Cardiac septum (tissue), 1 donor: ENCODE measurements at regions of chr14 and their contacts with region 1.

Region 1: DNA sequence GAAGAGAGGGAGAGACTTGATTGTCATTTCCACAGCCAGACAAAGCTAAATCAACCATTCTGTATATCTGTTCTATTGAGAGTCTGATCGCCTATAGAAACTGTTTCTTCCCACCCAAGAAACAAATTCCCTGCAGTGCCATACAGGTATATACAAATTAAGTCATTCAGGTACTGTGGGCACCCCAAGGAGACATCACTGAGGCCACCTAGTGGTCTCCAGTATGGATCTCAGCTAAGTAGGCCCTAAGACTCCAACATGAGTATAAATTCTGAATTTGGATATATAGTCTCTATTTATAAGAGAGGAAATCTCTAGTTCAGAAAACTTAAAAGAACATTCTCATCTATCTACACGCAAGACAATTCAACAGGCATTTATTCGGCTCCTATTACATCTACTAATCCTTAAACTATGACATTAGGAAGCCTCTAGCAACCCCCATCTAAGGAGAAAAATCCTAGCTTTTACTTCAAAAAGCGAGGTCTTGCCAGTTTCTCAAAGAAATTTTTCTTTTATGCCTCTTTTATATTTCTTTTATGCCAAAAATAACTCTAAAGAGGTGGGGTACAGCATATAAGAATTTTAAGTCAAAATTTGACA is 62.6 kb downstream of the DCAF5 start:
- DNase-seq: no peak

Region 2: GRCh38 chr14:68703093-68703492 is 387.2 kb before region 1 on chr14:
- intact Hi-C with region 1: no loop called
- DNase-seq: peak; percentile 76

Region 3: DNA sequence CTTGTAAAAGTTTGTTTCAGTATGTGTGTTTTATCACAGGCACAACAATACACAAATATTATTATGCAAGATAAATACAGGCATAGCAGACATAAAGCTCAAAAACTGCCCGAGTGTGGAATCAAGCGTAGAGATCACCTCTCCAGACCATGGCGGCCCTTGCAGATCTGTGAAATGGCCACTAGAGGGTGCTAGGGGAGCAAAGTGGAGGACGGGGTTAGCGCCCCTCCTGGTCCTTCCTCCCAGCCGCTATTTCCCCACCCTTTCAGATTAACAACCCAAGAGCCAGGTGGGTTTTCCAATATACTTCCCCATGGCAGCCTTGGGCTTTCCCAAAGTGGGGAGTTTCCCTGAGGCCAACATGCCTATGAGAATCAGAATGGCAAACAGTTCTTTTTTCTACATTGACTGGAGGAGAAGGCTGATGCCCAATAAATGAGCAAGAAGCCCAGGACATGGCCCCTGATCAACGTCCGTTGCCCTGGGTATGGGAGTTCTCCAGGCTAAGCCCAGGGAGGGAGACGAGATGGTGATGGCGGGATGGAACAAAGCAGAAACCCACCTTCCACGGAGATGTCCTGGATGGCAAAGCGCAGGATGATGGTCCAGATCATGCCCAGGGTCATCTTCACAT is 178.6 kb before region 1 on chr14:
- intact Hi-C with region 1: loop called (anchors 5 kb)
- DNase-seq: peak; percentile 86